Motor neuron (in vitro differentiated cells): ENCODE measurements at regions of chr3 and their contacts with region 1.

Region 1: DNA sequence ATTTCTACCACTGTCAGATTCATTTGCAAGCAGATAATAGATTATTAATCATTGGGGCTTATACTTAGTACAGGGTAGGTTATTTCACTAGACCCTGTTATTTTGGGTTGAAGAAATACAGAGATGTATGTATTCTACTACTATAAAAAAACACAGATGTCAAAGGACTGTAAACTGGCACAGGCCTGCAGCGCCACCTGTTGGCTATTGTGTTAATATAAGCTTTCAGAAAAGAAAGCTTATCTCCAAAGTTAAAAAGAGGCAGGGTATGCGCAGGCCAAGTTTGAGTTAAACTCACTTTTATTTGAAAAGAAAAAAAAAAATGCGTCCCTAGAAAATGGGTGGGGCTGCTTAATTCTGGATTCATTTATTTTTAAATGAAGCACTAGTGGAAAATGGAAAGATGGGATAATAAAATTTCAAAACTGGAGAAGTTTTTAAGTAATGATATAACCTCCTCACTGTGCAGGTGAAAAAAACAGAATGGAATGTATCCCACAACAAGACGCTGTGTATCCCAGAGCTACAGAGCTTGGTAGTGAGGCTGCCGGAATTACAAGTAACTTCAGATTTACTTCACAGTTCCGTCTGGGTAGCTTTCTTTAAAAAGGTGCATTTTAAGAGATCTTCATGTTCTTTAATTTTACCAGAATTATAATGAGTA is 407.2 kb upstream of the TGFBR2 start:
- ATAC-seq: peak in 3 of 8 experiments; percentile 21 to 55 (median 31)
- H3K4me3 ChIP-seq: no peak overlapping the region
- H3K27ac ChIP-seq: no peak overlapping the region
- H3K4me1 ChIP-seq: no peaks in the 10 kb centered on the region

Region 2: GRCh38 chr3:29731050-29731449 is 468.2 kb before region 1 on chr3:
- in situ Hi-C with region 1: no loop called
- ATAC-seq: no peak
- H3K4me3 ChIP-seq: no peak overlapping the region
- H3K27ac ChIP-seq: no peak overlapping the region
- H3K4me1 ChIP-seq: no peaks in the 10 kb centered on the region

Region 3: DNA sequence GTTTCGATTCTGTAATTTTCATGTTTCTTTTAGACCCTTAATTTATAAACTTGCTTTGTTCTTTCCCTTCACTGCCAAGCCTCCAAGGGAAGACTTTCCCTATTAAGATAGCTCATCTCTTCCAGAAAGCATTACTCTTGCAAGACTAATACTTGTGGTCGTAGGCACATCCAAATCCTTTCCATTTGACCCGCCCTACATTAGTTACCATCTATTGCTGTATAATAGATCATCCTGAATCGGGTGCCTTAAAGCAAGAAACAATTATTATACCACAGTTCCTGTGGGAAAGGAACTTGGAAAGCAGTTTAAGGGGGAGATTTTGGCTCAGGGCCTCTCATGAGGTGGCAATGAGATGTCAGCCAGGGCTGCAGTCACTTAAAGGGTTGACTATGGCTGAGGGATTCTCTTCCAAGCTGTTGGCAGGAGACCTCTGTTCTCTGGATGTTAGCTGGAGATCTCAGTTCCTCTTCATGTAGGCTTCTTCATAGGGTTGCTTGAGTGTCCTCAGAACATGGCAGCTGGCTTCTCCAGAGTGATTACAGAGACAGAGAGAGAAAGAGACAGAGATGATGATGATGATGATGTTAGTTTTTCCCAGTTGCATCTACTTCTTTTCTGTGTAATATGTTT is 163.2 kb before region 1 on chr3:
- in situ Hi-C with region 1: loop called in 4 of 9 experiments (anchors 10 to 25 kb)
- ATAC-seq: no peak
- H3K4me3 ChIP-seq: no peak overlapping the region
- H3K27ac ChIP-seq: no peak overlapping the region
- H3K4me1 ChIP-seq: no peaks in the 10 kb centered on the region

Region 4: DNA sequence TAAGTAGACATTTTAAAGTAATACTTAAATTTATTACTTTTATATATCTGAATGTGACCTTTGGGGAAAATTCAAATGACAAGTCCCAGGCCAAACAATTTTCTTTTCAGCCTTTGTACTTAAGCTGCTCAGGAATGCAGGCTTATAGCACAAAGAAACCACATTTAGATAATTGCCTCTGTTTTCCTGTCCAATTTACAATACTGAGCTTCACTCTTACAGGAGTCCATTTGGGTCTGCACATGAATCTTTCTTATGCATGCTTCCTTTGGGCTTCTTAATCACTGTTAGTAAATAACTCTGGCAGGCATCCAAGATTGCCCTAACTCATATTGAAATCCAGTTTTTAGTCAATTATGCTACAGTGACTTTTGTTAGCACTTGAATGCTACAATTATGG is 52.2 kb before region 1 on chr3:
- in situ Hi-C with region 1: no loop called
- ATAC-seq: no peak
- H3K4me3 ChIP-seq: no peak overlapping the region
- H3K27ac ChIP-seq: no peak overlapping the region
- H3K4me1 ChIP-seq: no peaks in the 10 kb centered on the region